Endothelial cell of umbilical vein (primary cell): ENCODE measurements at regions of chr6 and their contacts with region 1.

Region 1: GRCh38 chr6:152124429-152125074 is 317.1 kb downstream of the ESR1 start:
- DNase-seq: peak; percentile 81
- H3K4me3 ChIP-seq: no peak overlapping the region
- H3K27ac ChIP-seq: no peak overlapping the region
- H3K4me1 ChIP-seq: peaks cover 1% of the 10 kb centered on the region
- H3K27me3 ChIP-seq: no peaks in the 10 kb centered on the region
- CTCF ChIP-seq: peak; percentile 53 to 55
- POLR2A ChIP-seq: no peak

Region 2: DNA sequence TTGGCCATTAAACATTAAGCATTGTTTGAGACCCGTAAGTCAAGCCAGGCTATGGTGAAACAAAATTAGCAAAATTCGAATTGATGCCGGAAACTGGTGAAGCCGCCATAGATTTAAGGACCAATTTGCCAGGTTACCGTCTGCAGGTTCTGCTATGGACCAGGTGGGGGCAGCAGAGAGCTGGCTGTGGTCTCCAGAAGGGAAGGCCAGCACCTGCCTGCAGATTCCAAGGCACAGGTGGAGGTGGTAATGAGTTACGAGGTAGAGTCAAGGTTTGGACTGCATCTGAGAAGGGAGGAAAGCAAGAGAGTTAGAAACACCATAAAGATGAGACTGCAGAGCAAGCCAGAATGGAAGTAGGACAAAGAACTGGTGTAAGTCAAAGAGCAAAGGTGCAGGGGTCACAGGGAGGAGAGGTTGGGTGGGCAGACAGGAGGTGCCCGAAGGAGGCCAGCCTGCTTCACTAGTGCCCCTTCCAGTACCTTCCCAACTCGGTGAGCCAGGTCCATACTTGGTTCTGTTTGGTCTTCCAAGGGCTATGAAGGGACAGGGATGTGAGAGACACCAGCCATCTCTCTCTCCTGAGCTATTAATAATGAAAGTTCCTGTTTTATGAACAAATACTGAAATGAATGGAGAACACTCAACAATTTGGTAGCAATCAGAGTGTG is 448.7 kb before region 1 on chr6:
- CTCF ChIA-PET with region 1: interaction called, 33 read pairs
- POLR2A ChIA-PET with region 1: no interaction called
- dilution Hi-C with region 1: no loop called
- intact Hi-C with region 1: loop called (anchors 1 kb)
- DNase-seq: peak; percentile 46
- H3K4me3 ChIP-seq: peak overlapping the region in 1 of 3 experiments; percentile 3
- H3K27ac ChIP-seq: no peak overlapping the region
- H3K4me1 ChIP-seq: peaks cover 8% of the 10 kb centered on the region
- H3K27me3 ChIP-seq: peaks cover 0 to 1% of the 10 kb centered on the region in 2 experiments
- CTCF ChIP-seq: peak; percentile 92
- POLR2A ChIP-seq: no peak

Region 3: DNA sequence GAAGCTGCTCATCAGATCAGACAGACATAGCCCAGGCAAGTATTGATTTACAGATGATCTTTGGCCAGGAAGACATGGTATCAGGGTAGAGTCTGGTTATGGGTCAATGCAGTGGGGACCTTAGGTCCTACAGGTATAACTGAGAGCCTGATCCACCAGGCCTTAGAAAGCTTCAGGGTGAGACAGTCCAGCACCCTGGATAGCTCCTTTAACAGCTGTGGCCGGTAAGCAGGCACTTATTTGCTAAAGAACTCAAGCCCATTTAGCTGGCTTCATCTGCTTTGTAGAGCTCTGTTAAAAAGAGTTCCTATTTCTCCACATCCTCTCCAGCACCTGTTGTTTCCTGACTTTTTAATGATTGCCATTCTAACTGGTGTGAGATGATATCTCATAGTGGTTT is 277.5 kb before region 1 on chr6:
- CTCF ChIA-PET with region 1: interaction called, 12 read pairs
- POLR2A ChIA-PET with region 1: no interaction called
- dilution Hi-C with region 1: no loop called
- intact Hi-C with region 1: no loop called
- DNase-seq: peak; percentile 55
- H3K4me3 ChIP-seq: no peak overlapping the region
- H3K27ac ChIP-seq: no peak overlapping the region
- H3K4me1 ChIP-seq: no peaks in the 10 kb centered on the region
- H3K27me3 ChIP-seq: no peaks in the 10 kb centered on the region
- CTCF ChIP-seq: no peak
- POLR2A ChIP-seq: no peak

Region 4: GRCh38 chr6:152062476-152062875 is 62.1 kb before region 1 on chr6:
- CTCF ChIA-PET with region 1: interaction called, 10 read pairs
- POLR2A ChIA-PET with region 1: no interaction called
- dilution Hi-C with region 1: no loop called
- intact Hi-C with region 1: no loop called
- DNase-seq: no peak
- H3K4me3 ChIP-seq: no peak overlapping the region
- H3K27ac ChIP-seq: no peak overlapping the region
- H3K4me1 ChIP-seq: no peaks in the 10 kb centered on the region
- H3K27me3 ChIP-seq: peaks cover 0 to 3% of the 10 kb centered on the region in 2 experiments
- CTCF ChIP-seq: no peak
- POLR2A ChIP-seq: no peak

Region 5: GRCh38 chr6:152100183-152100618 is 24.4 kb before region 1 on chr6:
- CTCF ChIA-PET with region 1: interaction called, 67 read pairs
- POLR2A ChIA-PET with region 1: no interaction called
- dilution Hi-C with region 1: no loop called
- intact Hi-C with region 1: no loop called
- DNase-seq: peak; percentile 68
- H3K4me3 ChIP-seq: no peak overlapping the region
- H3K27ac ChIP-seq: peak overlapping the region; percentile 58
- H3K4me1 ChIP-seq: peaks cover 38% of the 10 kb centered on the region
- H3K27me3 ChIP-seq: no peaks in the 10 kb centered on the region
- CTCF ChIP-seq: no peak
- POLR2A ChIP-seq: no peak

Region 6: DNA sequence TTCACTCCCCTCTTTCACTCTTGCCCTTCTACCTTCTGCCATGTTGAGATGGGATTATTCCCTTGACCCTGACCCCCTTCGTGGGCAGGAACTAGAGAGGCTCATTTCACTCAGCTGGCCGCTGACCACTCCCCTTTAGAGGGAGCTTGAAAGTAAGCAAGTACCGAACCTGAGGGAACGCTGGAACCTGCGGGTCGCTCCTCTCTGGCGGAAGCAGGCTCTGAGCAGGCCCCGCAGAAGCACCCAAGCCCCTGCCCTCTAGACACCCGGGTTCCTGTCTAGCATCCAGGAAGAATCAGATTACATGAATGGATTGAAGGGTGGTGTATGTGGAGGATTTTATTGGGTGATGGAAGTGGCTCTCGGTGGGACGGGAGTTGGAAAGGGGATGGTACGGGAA is 561.3 kb after region 1 on chr6:
- CTCF ChIA-PET with region 1: no interaction called
- POLR2A ChIA-PET with region 1: no interaction called
- dilution Hi-C with region 1: no loop called
- intact Hi-C with region 1: no loop called
- DNase-seq: no peak
- H3K4me3 ChIP-seq: no peak overlapping the region
- H3K27ac ChIP-seq: no peak overlapping the region
- H3K4me1 ChIP-seq: no peaks in the 10 kb centered on the region
- H3K27me3 ChIP-seq: no peaks in the 10 kb centered on the region
- CTCF ChIP-seq: no peak
- POLR2A ChIP-seq: no peak